BJ (cell line): ENCODE measurements at regions of chr14 and their contacts with region 1.

Region 1: DNA sequence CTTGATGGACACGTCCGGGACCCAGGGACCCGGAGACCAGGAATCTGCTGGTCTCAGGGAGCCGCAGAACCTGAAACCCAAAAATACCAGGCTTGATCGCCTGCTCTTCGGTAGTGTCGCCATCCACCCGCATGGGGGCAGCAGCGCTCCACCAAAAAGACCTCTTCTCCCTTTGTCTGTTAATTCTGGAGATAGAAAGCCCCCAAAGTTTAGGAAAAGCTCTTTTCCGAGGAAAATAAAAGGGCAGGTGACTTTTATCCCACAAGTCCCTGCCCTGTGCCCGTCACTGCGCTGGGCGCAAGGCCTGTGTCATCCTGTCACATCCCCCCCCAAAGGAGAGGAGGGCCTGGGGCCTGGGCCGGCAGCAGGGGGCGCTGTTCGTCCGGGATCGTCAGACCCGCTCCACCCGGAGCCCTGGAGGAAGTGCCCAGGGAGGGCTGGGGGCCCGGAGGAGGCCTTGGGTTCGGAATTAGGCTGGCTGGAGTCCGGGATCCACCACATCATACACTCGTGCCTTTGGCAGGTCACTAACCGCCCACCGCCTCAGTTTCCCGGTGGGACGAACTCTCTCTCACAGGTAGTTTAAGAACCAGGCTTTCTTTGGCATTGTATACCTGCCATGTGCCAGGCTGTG is 31.9 kb downstream of the DAD1 start:
- DNase-seq: no peak
- H3K4me3 ChIP-seq: peak overlapping the region; percentile 22
- H3K27me3 ChIP-seq: no peaks in the 10 kb centered on the region
- CTCF ChIP-seq: peak; percentile 96

Region 2: DNA sequence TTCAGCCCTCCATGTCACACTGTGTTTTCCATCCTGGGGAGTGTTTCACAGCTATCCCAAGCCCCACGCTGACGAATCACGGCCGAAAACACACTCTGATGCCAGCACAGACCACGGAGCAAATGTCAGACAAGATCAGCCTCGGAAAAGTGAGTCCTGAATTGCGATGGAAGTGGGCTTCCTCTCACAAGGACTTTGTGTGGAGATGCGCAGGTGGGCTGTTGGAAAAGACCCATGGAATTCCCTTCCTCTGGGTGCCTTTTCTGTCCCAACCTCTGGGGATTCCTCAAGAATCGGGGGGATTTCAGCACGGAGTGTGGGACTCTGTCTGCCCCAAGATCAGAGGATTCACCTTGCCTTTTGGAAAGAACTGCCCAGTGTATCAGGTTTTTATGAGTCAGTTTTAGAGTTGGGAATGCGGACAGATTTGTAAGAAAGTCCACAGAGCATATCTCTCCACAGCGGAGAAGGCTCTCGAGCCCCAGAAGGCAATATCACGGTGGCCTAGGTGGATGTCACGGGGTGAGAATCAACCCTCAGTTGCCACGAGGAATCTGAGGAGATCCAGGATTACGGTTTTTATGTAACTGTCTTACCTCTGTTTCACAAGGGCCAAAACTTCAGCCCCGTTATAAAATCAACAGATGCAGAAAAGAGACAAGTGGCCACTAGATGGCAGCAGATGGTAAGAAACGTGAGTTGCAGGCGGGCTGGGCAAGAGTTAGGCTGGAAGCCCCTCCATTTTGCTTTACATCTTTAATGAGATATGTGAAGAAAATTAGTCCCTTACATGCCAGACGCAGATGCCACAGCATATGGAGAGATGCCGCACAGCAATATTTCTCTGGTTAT is 170.0 kb before region 1 on chr14:
- CTCF ChIA-PET with region 1: interaction called, 26 read pairs
- POLR2A ChIA-PET with region 1: no interaction called
- DNase-seq: no peak
- H3K4me3 ChIP-seq: no peak overlapping the region
- H3K27me3 ChIP-seq: peaks cover 9% of the 10 kb centered on the region
- CTCF ChIP-seq: peak; percentile 74

Region 3: GRCh38 chr14:22510527-22511110 is 46.5 kb before region 1 on chr14:
- CTCF ChIA-PET with region 1: interaction called, 4 read pairs
- POLR2A ChIA-PET with region 1: interaction called, 16 read pairs
- DNase-seq: peak; percentile 92
- H3K4me3 ChIP-seq: no peak overlapping the region
- H3K27me3 ChIP-seq: peaks cover 2% of the 10 kb centered on the region; the same call in 1 of the 2 replicates
- CTCF ChIP-seq: no peak

Region 4: GRCh38 chr14:22540811-22541360 is 16.2 kb before region 1 on chr14:
- CTCF ChIA-PET with region 1: interaction called, 26 read pairs
- POLR2A ChIA-PET with region 1: no interaction called
- DNase-seq: no peak
- H3K4me3 ChIP-seq: no peak overlapping the region
- H3K27me3 ChIP-seq: no peaks in the 10 kb centered on the region
- CTCF ChIP-seq: no peak

Region 5: GRCh38 chr14:22545842-22546721 is 11.0 kb before region 1 on chr14:
- CTCF ChIA-PET with region 1: interaction called, 26 read pairs
- POLR2A ChIA-PET with region 1: no interaction called
- DNase-seq: peak; percentile 45
- H3K4me3 ChIP-seq: no peak overlapping the region
- H3K27me3 ChIP-seq: no peaks in the 10 kb centered on the region
- CTCF ChIP-seq: no peak

Region 6: DNA sequence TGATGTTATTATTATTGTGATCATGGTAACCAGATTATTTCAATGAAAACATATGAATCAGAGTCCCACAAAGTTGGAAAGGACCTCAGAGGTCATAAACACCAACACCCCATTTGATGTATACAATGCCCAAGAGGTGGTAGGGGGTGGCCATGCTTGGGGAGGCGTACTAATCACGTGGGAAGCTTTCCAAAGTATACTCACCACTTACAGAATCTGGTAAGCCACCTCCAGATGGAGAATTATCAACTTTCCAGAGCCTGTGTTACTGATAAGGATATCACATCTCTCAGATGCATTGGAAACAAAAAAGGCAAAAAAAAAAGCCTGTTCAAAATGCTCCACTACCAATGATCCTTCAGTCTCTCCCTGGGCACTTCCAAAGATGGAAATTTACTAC is 23.5 kb after region 1 on chr14:
- CTCF ChIA-PET with region 1: no interaction called
- POLR2A ChIA-PET with region 1: no interaction called
- DNase-seq: no peak
- H3K4me3 ChIP-seq: no peak overlapping the region
- H3K27me3 ChIP-seq: no peaks in the 10 kb centered on the region
- CTCF ChIP-seq: no peak

Region 7: GRCh38 chr14:22653012-22653621 is 96.0 kb after region 1 on chr14:
- CTCF ChIA-PET with region 1: interaction called, 19 read pairs
- POLR2A ChIA-PET with region 1: no interaction called
- DNase-seq: peak; percentile 26
- H3K4me3 ChIP-seq: no peak overlapping the region
- H3K27me3 ChIP-seq: no peaks in the 10 kb centered on the region
- CTCF ChIP-seq: peak; percentile 97

Region 8: DNA sequence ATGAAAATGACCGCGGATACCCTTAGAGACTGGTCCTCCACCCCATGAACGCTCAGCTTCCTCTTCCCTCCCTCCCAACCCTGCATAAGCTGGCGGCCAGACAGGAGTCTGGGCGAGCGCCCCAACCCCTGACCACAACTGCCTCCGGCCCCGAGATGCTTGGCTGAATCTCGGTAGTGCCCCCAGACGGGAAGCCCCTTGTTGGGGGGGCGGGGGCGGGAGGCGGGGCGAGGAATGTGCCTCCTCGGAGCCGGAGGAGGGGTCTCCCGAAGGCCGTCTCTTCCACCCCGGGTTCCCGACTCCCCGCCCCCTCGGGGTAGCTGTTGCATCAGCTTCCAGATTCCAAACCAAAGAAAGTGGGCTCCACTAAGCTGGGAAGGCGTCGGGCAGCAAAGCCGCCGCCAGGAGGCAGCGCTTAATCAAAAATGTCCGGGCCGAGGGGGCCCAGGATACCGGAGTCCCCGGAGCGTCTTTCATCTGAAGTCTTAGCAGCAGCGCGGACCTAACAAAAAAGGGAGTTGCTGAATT is 265.5 kb after region 1 on chr14:
- CTCF ChIA-PET with region 1: interaction called, 19 read pairs
- POLR2A ChIA-PET with region 1: interaction called, 14 read pairs
- DNase-seq: peak; percentile 54
- H3K4me3 ChIP-seq: peak overlapping the region; percentile 28
- H3K27me3 ChIP-seq: no peaks in the 10 kb centered on the region
- CTCF ChIP-seq: peak; percentile 90